A549 (cell line): ENCODE measurements at regions of chr17 and their contacts with region 1.

Region 1: DNA sequence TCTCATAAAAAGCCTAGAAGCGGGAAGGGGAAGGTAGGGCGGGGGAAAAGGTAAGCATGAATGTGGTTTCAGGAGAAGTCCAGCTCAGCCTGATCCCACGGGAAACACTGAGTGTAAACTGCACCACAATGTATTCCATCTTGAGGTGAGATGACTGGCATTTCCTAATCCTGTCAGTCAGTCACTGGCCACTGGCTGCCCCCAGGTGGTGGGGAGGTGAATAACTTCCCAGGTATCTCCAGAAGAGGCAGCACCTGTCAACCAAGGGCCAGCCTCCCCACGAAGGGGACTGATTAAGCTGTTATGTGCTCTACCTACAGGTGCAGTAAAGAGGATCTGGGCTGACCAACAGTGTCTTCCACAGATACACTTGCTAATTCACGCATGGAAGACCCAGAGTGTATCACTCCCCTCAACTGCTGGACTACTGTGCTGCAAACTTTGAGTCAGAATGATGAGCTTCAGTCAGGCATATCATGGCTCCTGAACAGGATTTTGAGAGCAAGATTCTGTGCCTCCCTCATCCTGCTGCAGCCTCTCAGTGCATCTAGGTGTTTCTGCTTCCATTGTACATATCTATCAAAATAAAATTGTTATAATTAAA is 108.5 kb upstream of the CCL2 start:
- DNase-seq: peak; percentile 44 to 61
- ATAC-seq: peak; percentile 86 to 89
- H3K4me3 ChIP-seq: no peak overlapping the region
- H3K27ac ChIP-seq: no peak overlapping the region
- H3K4me1 ChIP-seq: no peaks in the 10 kb centered on the region
- CTCF ChIP-seq: peak; percentile 48
- EP300 ChIP-seq: no peak
- POLR2A ChIP-seq: no peak
- RAD21 ChIP-seq: peak; percentile 59 to 73

Region 2: GRCh38 chr17:33580215-33580614 is 566.3 kb before region 1 on chr17:
- CTCF ChIA-PET with region 1: no interaction called
- POLR2A ChIA-PET with region 1: no interaction called
- DNase-seq: no peak
- ATAC-seq: no peak
- H3K4me3 ChIP-seq: no peak overlapping the region
- H3K27ac ChIP-seq: no peak overlapping the region
- H3K4me1 ChIP-seq: no peaks in the 10 kb centered on the region
- CTCF ChIP-seq: no peak
- EP300 ChIP-seq: no peak
- POLR2A ChIP-seq: no peak
- RAD21 ChIP-seq: no peak

Region 3: GRCh38 chr17:33785276-33785675 is 361.3 kb before region 1 on chr17:
- CTCF ChIA-PET with region 1: interaction called, 21 read pairs
- POLR2A ChIA-PET with region 1: no interaction called
- DNase-seq: no peak
- ATAC-seq: no peak
- H3K4me3 ChIP-seq: no peak overlapping the region
- H3K27ac ChIP-seq: no peak overlapping the region
- H3K4me1 ChIP-seq: no peaks in the 10 kb centered on the region
- CTCF ChIP-seq: no peak
- EP300 ChIP-seq: no peak
- POLR2A ChIP-seq: no peak
- RAD21 ChIP-seq: no peak

Region 4: DNA sequence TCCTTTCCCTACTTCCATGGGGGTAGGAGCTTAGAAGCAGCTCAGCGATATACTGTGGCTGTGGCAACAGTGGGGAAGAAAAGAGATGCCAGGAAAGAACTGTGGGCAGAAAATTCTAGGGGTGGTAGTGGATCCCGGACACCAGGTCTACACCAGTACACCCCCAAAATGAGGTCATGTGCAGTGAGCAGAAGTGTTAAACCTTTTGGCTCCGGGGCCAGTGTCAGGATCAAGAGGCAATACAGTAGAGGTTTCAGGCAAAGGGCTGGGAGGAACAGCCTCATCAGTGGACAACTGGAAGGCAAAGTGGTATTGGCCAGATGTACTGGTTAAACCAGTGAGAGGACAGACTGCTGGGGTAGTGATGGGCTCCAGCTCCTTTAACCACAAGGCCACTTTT is 54.6 kb before region 1 on chr17:
- CTCF ChIA-PET with region 1: no interaction called
- POLR2A ChIA-PET with region 1: no interaction called
- DNase-seq: no peak
- ATAC-seq: no peak
- H3K4me3 ChIP-seq: no peak overlapping the region
- H3K27ac ChIP-seq: no peak overlapping the region
- H3K4me1 ChIP-seq: no peaks in the 10 kb centered on the region
- CTCF ChIP-seq: no peak
- EP300 ChIP-seq: no peak
- POLR2A ChIP-seq: no peak
- RAD21 ChIP-seq: no peak

Region 5: DNA sequence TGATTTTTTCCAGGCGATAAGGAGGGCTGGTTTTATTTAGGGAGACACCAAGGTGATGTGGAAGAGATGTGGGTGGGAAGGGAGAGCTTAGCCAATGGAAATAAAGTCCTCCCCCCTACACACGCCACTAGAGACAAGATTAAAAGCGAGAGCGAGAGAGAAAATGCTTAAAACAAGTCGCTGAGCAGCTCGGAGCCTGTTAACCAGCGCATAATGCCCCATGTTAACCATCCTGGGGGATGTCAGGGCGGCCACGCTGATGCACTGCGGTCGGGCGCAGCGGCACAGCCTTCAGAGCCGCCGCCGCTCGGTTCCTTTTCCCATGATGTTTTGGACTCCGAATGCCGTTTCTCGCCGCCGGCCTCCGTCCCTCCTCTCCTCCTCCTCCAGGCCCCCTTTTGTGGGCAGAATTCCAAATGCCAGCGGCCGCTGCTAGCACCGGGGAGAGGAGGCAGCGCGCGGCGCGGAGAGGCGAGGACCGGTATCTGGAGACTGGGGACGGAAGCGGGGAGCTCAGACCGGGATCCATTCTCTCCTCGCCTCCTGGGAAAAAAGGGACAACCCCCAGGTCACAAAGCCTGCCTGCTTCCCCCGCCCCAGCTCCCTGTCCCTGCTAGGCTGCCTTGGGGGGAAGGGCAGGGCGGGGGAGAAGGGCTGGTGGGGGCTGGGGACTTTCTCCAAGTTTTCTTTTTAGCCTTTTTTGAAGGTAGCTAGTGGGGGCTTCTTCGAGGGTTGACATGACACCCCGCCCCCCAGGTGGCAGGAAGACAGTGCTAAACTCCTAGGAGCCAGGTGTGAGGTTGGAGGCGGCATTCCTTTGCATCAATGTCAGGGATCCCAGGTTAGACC is 10.4 kb after region 1 on chr17:
- CTCF ChIA-PET with region 1: interaction called, 17 read pairs
- POLR2A ChIA-PET with region 1: no interaction called
- DNase-seq: no peak
- ATAC-seq: no peak
- H3K4me3 ChIP-seq: no peak overlapping the region
- H3K27ac ChIP-seq: no peak overlapping the region
- H3K4me1 ChIP-seq: no peaks in the 10 kb centered on the region
- CTCF ChIP-seq: no peak
- EP300 ChIP-seq: no peak
- POLR2A ChIP-seq: no peak
- RAD21 ChIP-seq: no peak

Region 6: GRCh38 chr17:34275881-34276280 is 129.3 kb after region 1 on chr17:
- CTCF ChIA-PET with region 1: no interaction called
- POLR2A ChIA-PET with region 1: no interaction called
- DNase-seq: peak in 1 of 2 experiments; percentile 51
- ATAC-seq: peak; percentile 54 to 78; a peak in 4 of 6 replicates
- H3K4me3 ChIP-seq: no peak overlapping the region
- H3K27ac ChIP-seq: no peak overlapping the region
- H3K4me1 ChIP-seq: peaks cover 10% of the 10 kb centered on the region; the same call in 2 of the 3 replicates
- CTCF ChIP-seq: no peak
- EP300 ChIP-seq: no peak
- POLR2A ChIP-seq: no peak
- RAD21 ChIP-seq: no peak